K562 (cell line): ENCODE measurements at regions of chr9 and their contacts with region 1.

Region 1: GRCh38 chr9:97921959-97922724 is at the start of gene TRMO:
- DNase-seq: peak; percentile 94 to 99 (median 96)
- ATAC-seq: peak; percentile 82
- H3K4me3 ChIP-seq: peak within 1 kb of the TSS; percentile 47
- H3K27ac ChIP-seq: peak within 1 kb of the TSS; percentile 96
- H3K4me1 ChIP-seq: peaks cover 5 to 25% of the 10 kb centered on the region in 2 experiments
- H3K27me3 ChIP-seq: no peaks in the 10 kb centered on the region
- CTCF ChIP-seq: peak; percentile 83 to 95 (median 87)
- EP300 ChIP-seq: peak; percentile 65
- POLR2A ChIP-seq: peak; percentile 98
- RAD21 ChIP-seq: peak; percentile 73 to 79
- polyA plus RNA-seq, gene TRMO: 5.6 to 12.8 TPM

Region 2: DNA sequence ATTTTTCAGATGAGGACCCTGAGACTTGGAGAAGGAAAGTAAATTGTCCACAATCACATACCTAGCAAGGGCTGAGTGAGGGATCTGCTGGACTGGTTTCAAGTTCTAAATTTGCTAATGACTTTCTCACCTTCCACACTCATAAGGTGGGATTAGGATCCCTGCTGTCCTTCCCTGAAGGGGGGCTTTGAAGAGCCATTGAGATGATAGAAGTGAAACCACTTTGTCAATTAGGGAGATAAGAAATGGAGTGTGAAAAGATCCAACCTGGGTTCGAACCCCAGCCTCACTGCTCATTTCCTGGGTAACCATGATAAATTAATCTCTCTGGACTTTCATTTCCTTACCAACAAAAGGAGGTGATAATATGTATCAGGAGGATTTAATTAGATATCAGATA is 101.8 kb before region 1 on chr9:
- CTCF ChIA-PET with region 1: no interaction called
- POLR2A ChIA-PET with region 1: no interaction called
- in situ Hi-C with region 1: no loop called
- intact Hi-C with region 1: no loop called
- DNase-seq: no peak
- ATAC-seq: no peak
- H3K4me3 ChIP-seq: no peak overlapping the region
- H3K27ac ChIP-seq: no peak overlapping the region
- H3K4me1 ChIP-seq: no peaks in the 10 kb centered on the region
- H3K27me3 ChIP-seq: peaks cover 0 to 3% of the 10 kb centered on the region in 2 experiments; a peak in 3 of 5 replicates
- CTCF ChIP-seq: no peak
- EP300 ChIP-seq: no peak
- POLR2A ChIP-seq: no peak
- RAD21 ChIP-seq: no peak

Region 3: GRCh38 chr9:97900738-97901565 is 21.2 kb before region 1 on chr9:
- CTCF ChIA-PET with region 1: no interaction called
- POLR2A ChIA-PET with region 1: interaction called, 13 read pairs
- in situ Hi-C with region 1: no loop called
- intact Hi-C with region 1: no loop called
- DNase-seq: peak; percentile 61 to 66 (median 61)
- ATAC-seq: peak; percentile 86
- H3K4me3 ChIP-seq: no peak overlapping the region
- H3K27ac ChIP-seq: no peak overlapping the region
- H3K4me1 ChIP-seq: no peaks in the 10 kb centered on the region; a peak in 1 of 5 replicates
- H3K27me3 ChIP-seq: no peaks in the 10 kb centered on the region
- CTCF ChIP-seq: peak; percentile 54 to 80 (median 72)
- EP300 ChIP-seq: no peak
- POLR2A ChIP-seq: no peak
- RAD21 ChIP-seq: peak; percentile 59 to 69

Region 4: GRCh38 chr9:97954550-97954989 is 32.4 kb after region 1 on chr9:
- CTCF ChIA-PET with region 1: interaction called, 36 read pairs
- POLR2A ChIA-PET with region 1: interaction called, 5 read pairs
- in situ Hi-C with region 1: no loop called
- intact Hi-C with region 1: loop called (anchors 1 kb)
- DNase-seq: peak; percentile 67 to 92 (median 76)
- ATAC-seq: peak; percentile 94
- H3K4me3 ChIP-seq: no peak overlapping the region
- H3K27ac ChIP-seq: peak overlapping the region; percentile 64
- H3K4me1 ChIP-seq: peaks cover 25 to 34% of the 10 kb centered on the region in 2 experiments; a peak in 4 of 5 replicates
- H3K27me3 ChIP-seq: no peaks in the 10 kb centered on the region
- CTCF ChIP-seq: peak; percentile 88 to 92 (median 88)
- EP300 ChIP-seq: peak; percentile 28
- POLR2A ChIP-seq: no peak
- RAD21 ChIP-seq: peak; percentile 83 to 94

Region 5: GRCh38 chr9:97997330-97998276 is 75.5 kb after region 1 on chr9:
- CTCF ChIA-PET with region 1: interaction called, 4 read pairs
- POLR2A ChIA-PET with region 1: interaction called, 10 read pairs
- in situ Hi-C with region 1: no loop called
- intact Hi-C with region 1: no loop called
- DNase-seq: no peak
- ATAC-seq: no peak; the same call in 2 of the 3 replicates
- H3K4me3 ChIP-seq: no peak overlapping the region
- H3K27ac ChIP-seq: peak overlapping the region; percentile 4; the same call in 1 of the 3 replicates
- H3K4me1 ChIP-seq: peaks cover 0 to 8% of the 10 kb centered on the region in 2 experiments; a peak in 3 of 5 replicates
- H3K27me3 ChIP-seq: no peaks in the 10 kb centered on the region
- CTCF ChIP-seq: no peak
- EP300 ChIP-seq: no peak
- POLR2A ChIP-seq: peak; percentile 54
- RAD21 ChIP-seq: no peak

Region 6: GRCh38 chr9:98074115-98074990 is 152.2 kb after region 1 on chr9:
- CTCF ChIA-PET with region 1: interaction called, 3 read pairs
- POLR2A ChIA-PET with region 1: interaction called, 5 read pairs
- in situ Hi-C with region 1: no loop called
- intact Hi-C with region 1: loop called (anchors 2 kb)
- DNase-seq: peak; percentile 62 to 78 (median 68)
- ATAC-seq: peak; percentile 84
- H3K4me3 ChIP-seq: no peak overlapping the region
- H3K27ac ChIP-seq: peak overlapping the region; percentile 4; the same call in 2 of the 3 replicates
- H3K4me1 ChIP-seq: peaks cover 4% of the 10 kb centered on the region in 2 experiments; a peak in 2 of 5 replicates
- H3K27me3 ChIP-seq: no peaks in the 10 kb centered on the region
- CTCF ChIP-seq: peak; percentile 89 to 97 (median 94)
- EP300 ChIP-seq: no peak
- POLR2A ChIP-seq: no peak
- RAD21 ChIP-seq: peak; percentile 78 to 79

Region 7: GRCh38 chr9:98207606-98208005 is 285.5 kb after region 1 on chr9:
- CTCF ChIA-PET with region 1: interaction called, 3 read pairs
- POLR2A ChIA-PET with region 1: no interaction called
- in situ Hi-C with region 1: no loop called
- intact Hi-C with region 1: loop called (anchors 1 kb)
- DNase-seq: no peak
- ATAC-seq: no peak
- H3K4me3 ChIP-seq: no peak overlapping the region
- H3K27ac ChIP-seq: no peak overlapping the region
- H3K4me1 ChIP-seq: peaks cover 11 to 22% of the 10 kb centered on the region in 2 experiments; a peak in 4 of 5 replicates
- H3K27me3 ChIP-seq: no peaks in the 10 kb centered on the region
- CTCF ChIP-seq: peak; percentile 41 to 50 (median 43); a peak in 5 of 6 replicates
- EP300 ChIP-seq: no peak
- POLR2A ChIP-seq: no peak
- RAD21 ChIP-seq: peak in 1 of 2 experiments; percentile 42; a peak in 2 of 4 replicates

Region 8: GRCh38 chr9:98775831-98776441 is 853.8 kb after region 1 on chr9:
- CTCF ChIA-PET with region 1: interaction called, 18 read pairs
- POLR2A ChIA-PET with region 1: no interaction called
- in situ Hi-C with region 1: loop called (anchors 25 kb)
- intact Hi-C with region 1: no loop called
- DNase-seq: peak; percentile 80 to 81 (median 80)
- ATAC-seq: peak; percentile 93
- H3K4me3 ChIP-seq: no peak overlapping the region
- H3K27ac ChIP-seq: no peak overlapping the region
- H3K4me1 ChIP-seq: peaks cover 0 to 3% of the 10 kb centered on the region in 2 experiments; a peak in 1 of 5 replicates
- H3K27me3 ChIP-seq: no peaks in the 10 kb centered on the region
- CTCF ChIP-seq: peak; percentile 76 to 81 (median 81)
- EP300 ChIP-seq: no peak
- POLR2A ChIP-seq: no peak
- RAD21 ChIP-seq: peak; percentile 68 to 79